ENCODE measurements at regions of chr19 and their contacts with region 1.

Region 1: DNA sequence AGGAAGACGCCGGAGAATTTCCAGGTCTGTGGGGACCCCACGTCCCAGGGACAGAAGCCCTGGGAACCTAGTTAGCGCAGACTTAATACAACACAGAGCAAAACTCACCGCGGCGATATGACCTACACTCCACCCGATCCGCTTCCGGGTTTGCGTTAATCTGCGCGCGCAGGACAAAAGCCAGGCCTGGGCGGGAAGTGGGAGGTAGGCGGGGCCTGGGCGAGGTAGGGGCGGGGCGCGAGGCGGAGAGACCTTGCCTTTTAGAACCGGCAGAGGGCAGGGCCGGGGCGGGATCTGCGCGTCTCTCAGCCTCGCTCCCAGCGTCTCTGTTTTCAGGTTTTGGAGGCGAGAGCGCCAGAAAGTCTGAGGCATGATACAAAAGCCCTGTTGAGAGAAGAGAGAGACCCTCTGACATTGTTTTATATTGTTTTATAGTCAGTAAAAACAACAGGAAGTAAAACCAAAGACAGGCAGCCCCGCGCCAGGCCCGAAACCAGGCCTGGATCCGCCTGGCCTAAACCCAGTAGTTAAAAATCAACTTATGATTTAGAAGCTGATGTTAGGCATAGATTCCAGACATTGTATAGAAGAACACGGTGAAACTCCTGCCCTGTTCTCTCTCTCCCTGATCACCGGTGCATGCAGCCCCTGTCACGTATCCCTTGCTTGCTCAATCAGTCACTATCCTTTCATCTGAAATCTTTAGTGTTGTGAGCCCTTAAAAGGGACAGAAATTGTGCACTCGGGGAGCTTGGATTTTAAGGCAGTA is at the start of gene ZNF611:
- DNase-seq: peak; percentile 99
- ATAC-seq: peak; percentile 99
- total RNA-seq, gene ZNF611: 9.2 to 11.3 TPM

Region 2: GRCh38 chr19:52516191-52516590 is 218.9 kb before region 1 on chr19:
- intact Hi-C with region 1: no loop called
- DNase-seq: no peak
- ATAC-seq: no peak

Region 3: GRCh38 chr19:52690369-52691214 is 44.5 kb before region 1 on chr19:
- intact Hi-C with region 1: loop called in 1 of 2 experiments (anchors 5 kb)
- DNase-seq: peak; percentile 97
- ATAC-seq: peak; percentile 100